AG04449 (cell line): ENCODE measurements at regions of chr1 and their contacts with region 1.

Region 1: DNA sequence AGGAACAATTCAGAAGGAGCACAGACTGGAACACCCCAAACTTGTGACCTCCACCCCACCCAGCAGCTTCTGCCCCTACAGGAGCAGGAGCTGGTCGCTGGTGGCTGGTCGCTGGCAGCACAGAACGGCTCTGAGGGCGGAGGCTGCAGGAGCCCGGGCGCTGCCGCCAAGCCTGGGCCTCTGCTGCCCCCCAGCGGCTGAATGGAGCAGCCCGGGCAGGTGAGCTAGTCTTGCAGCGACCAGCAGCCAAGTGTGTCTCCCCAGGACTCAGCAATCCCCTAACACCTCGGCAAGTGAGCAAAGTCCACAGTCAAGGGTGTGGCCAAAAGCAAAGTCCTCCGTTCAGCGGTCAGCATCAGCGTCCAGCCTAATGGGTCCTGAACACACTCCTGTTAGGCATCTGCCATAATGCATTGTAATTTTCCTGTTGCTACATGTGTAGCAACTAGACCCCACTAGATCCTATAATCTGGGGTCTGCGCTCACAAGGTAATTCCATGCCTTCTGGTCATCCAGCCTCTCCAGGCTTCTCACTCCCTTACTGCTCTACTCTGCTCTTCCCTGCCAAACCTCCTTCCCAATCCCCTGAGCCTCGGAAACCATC is 12.1 kb upstream of the GJB5 start:
- DNase-seq: no peak
- H3K4me3 ChIP-seq: no peak overlapping the region
- CTCF ChIP-seq: peak; percentile 99

Region 2: GRCh38 chr1:34730485-34730884 is 12.3 kb before region 1 on chr1:
- CTCF ChIA-PET with region 1: interaction called, 11 read pairs
- POLR2A ChIA-PET with region 1: no interaction called
- DNase-seq: no peak
- H3K4me3 ChIP-seq: no peak overlapping the region
- CTCF ChIP-seq: no peak

Region 3: DNA sequence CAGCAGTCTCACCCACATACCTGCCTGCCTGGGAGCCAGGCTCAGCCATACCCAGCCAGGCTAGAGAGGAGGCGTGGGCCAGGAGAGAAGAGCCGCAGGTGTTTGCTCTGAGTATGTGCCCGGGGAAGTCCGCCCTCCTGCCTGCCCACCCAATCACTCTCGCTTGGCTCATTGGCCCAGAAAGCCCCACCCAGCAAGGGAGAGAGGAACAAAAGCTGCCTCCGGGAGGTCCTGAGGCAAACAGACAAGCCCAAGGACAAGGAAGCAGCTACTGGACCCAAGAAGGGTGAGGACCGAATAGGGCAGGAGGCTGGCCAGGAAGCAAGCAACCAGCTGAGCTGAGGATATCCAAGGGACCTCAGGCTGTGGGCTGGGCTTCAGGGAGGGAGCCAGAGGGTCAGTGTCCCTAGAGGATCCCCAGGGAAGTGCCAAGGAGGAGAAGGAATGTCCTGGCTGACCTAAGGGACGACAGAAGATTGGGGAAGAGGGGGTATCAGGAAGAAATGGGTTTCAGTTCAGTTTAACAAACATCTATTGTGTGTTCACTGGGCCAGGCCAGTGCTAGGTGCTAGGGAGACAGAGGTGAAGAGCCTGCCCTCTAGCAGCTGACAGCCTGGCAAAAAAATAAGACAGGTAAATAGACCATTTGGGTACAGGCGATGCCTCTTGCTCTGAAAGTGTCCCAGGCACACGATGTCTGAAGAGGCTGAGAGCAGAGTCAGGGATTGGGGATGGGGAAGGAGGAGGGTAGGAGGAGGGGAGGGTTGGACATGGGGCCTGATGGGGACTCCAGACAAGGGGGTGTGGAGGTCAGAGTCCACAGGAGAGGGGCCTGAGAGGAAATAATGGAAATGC is 17.0 kb after region 1 on chr1 and contains the start of gene GJB4:
- CTCF ChIA-PET with region 1: interaction called, 40 read pairs
- POLR2A ChIA-PET with region 1: no interaction called
- DNase-seq: no peak
- H3K4me3 ChIP-seq: no peak within 1 kb of the TSS
- CTCF ChIP-seq: no peak